HepG2 (cell line): ENCODE measurements at regions of chr20 and their contacts with region 1.

Region 1: GRCh38 chr20:47886460-47887041 is 101.3 kb upstream of the SULF2 start:
- DNase-seq: peak; percentile 88
- ATAC-seq: peak; percentile 97
- H3K4me3 ChIP-seq: peak overlapping the region in 1 of 3 experiments; percentile 14; a peak in 1 of 6 replicates
- H3K27ac ChIP-seq: no peak overlapping the region
- H3K4me1 ChIP-seq: peaks cover 20% of the 10 kb centered on the region
- H3K27me3 ChIP-seq: peaks cover 2 to 35% of the 10 kb centered on the region in 2 experiments; a peak in 4 of 5 replicates
- CTCF ChIP-seq: no peak
- EP300 ChIP-seq: no peak
- POLR2A ChIP-seq: no peak
- RAD21 ChIP-seq: peak; percentile 23; the same call in 1 of the 2 replicates

Region 2: GRCh38 chr20:47839200-47839599 is 47.4 kb before region 1 on chr20:
- CTCF ChIA-PET with region 1: no interaction called
- POLR2A ChIA-PET with region 1: interaction called, 4 read pairs
- in situ Hi-C with region 1: loop called (anchors 10 kb)
- intact Hi-C with region 1: loop called (anchors 5 kb)
- DNase-seq: no peak
- ATAC-seq: no peak
- H3K4me3 ChIP-seq: no peak overlapping the region
- H3K27ac ChIP-seq: no peak overlapping the region
- H3K4me1 ChIP-seq: no peaks in the 10 kb centered on the region
- H3K27me3 ChIP-seq: peaks cover 4 to 27% of the 10 kb centered on the region in 2 experiments
- CTCF ChIP-seq: no peak
- EP300 ChIP-seq: no peak
- POLR2A ChIP-seq: no peak
- RAD21 ChIP-seq: no peak

Region 3: GRCh38 chr20:47847868-47848531 is 38.6 kb before region 1 on chr20:
- CTCF ChIA-PET with region 1: no interaction called
- POLR2A ChIA-PET with region 1: no interaction called
- in situ Hi-C with region 1: loop called (anchors 10 kb)
- intact Hi-C with region 1: no loop called
- DNase-seq: no peak
- ATAC-seq: no peak
- H3K4me3 ChIP-seq: no peak overlapping the region
- H3K27ac ChIP-seq: no peak overlapping the region
- H3K4me1 ChIP-seq: no peaks in the 10 kb centered on the region
- H3K27me3 ChIP-seq: peaks cover 8 to 45% of the 10 kb centered on the region in 2 experiments; a peak in 4 of 5 replicates
- CTCF ChIP-seq: no peak
- EP300 ChIP-seq: no peak
- POLR2A ChIP-seq: no peak
- RAD21 ChIP-seq: no peak

Region 4: GRCh38 chr20:48523212-48523941 is 636.8 kb after region 1 on chr20:
- CTCF ChIA-PET with region 1: no interaction called
- POLR2A ChIA-PET with region 1: no interaction called
- in situ Hi-C with region 1: loop called (anchors 5 kb)
- intact Hi-C with region 1: no loop called
- DNase-seq: peak; percentile 82
- ATAC-seq: peak; percentile 95
- H3K4me3 ChIP-seq: no peak overlapping the region
- H3K27ac ChIP-seq: no peak overlapping the region
- H3K4me1 ChIP-seq: no peaks in the 10 kb centered on the region
- H3K27me3 ChIP-seq: peaks cover 0 to 1% of the 10 kb centered on the region in 2 experiments; a peak in 2 of 5 replicates
- CTCF ChIP-seq: no peak
- EP300 ChIP-seq: no peak
- POLR2A ChIP-seq: no peak
- RAD21 ChIP-seq: no peak